ENCODE measurements at regions of chr1 and their contacts with region 1.

Region 1: GRCh38 chr1:12658531-12659453 is 14.9 kb downstream of the AADACL4 start:
- DNase-seq: peak; percentile 43 to 83 (median 76)
- ATAC-seq: peak; percentile 82
- H3K4me3 ChIP-seq: no peak overlapping the region
- H3K4me3 Mint-ChIP-seq: no peak overlapping the region
- H3K27ac ChIP-seq: no peak overlapping the region
- H3K27ac Mint-ChIP-seq: no peak overlapping the region
- H3K4me1 ChIP-seq: no peaks in the 10 kb centered on the region
- H3K4me1 Mint-ChIP-seq: peaks cover 5% of the 10 kb centered on the region
- H3K27me3 ChIP-seq: peaks cover 0 to 5% of the 10 kb centered on the region in 2 experiments
- H3K27me3 Mint-ChIP-seq: peaks cover 5% of the 10 kb centered on the region
- CTCF ChIP-seq: peak; percentile 98

Region 2: GRCh38 chr1:12229835-12230548 is 428.8 kb before region 1 on chr1 and contains the start of gene VPS13D:
- CTCF ChIA-PET with region 1: interaction called, 8 read pairs
- POLR2A ChIA-PET with region 1: no interaction called
- intact Hi-C with region 1: loop called in 1 of 2 experiments (anchors 2 kb)
- DNase-seq: peak; percentile 68 to 91 (median 84)
- ATAC-seq: peak; percentile 95
- H3K4me3 ChIP-seq: peak within 1 kb of the TSS; percentile 95 to 97
- H3K4me3 Mint-ChIP-seq: peak within 1 kb of the TSS; percentile 93
- H3K27ac ChIP-seq: peak within 1 kb of the TSS; percentile 50 to 70
- H3K27ac Mint-ChIP-seq: peak within 1 kb of the TSS; percentile 86
- H3K4me1 ChIP-seq: peaks cover 15% of the 10 kb centered on the region
- H3K4me1 Mint-ChIP-seq: peaks cover 30% of the 10 kb centered on the region
- H3K27me3 ChIP-seq: no peaks in the 10 kb centered on the region
- H3K27me3 Mint-ChIP-seq: no peaks in the 10 kb centered on the region
- CTCF ChIP-seq: peak; percentile 98
- total RNA-seq, gene VPS13D: 55.8 to 58.7 TPM

Region 3: DNA sequence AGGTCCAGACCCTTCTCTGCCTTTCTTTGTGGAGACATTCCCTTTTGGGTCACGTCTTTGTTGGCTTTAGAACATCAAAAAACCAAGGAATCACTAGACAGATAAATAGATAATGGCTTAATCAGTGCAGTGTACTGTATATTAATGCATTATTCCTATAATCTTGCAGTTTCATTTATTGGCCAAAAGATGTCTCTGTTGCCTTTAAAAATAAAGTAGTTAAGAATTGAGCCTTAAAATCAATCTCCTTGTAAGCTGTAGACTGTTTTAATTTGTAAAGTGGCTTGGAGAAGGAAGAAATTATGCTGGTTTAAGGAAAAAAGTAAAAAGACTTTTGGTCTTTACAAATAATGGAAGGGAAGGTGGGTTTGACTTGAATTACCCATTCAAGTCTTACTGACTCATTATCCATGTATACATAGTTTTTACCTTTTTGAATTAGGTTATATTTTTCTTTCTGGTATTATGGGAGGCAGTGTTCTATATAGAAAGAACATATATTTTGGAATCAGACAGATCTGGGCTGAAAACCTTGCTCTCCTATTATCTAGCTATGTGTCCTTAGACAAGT is 344.4 kb before region 1 on chr1:
- CTCF ChIA-PET with region 1: interaction called, 66 read pairs
- POLR2A ChIA-PET with region 1: no interaction called
- intact Hi-C with region 1: loop called (anchors 1 kb)
- DNase-seq: peak in 2 of 9 experiments; percentile 19 to 34
- ATAC-seq: peak; percentile 36
- H3K4me3 ChIP-seq: no peak overlapping the region
- H3K4me3 Mint-ChIP-seq: no peak overlapping the region
- H3K27ac ChIP-seq: no peak overlapping the region
- H3K27ac Mint-ChIP-seq: no peak overlapping the region
- H3K4me1 ChIP-seq: no peaks in the 10 kb centered on the region
- H3K4me1 Mint-ChIP-seq: no peaks in the 10 kb centered on the region
- H3K27me3 ChIP-seq: no peaks in the 10 kb centered on the region
- H3K27me3 Mint-ChIP-seq: no peaks in the 10 kb centered on the region
- CTCF ChIP-seq: peak; percentile 73

Region 4: DNA sequence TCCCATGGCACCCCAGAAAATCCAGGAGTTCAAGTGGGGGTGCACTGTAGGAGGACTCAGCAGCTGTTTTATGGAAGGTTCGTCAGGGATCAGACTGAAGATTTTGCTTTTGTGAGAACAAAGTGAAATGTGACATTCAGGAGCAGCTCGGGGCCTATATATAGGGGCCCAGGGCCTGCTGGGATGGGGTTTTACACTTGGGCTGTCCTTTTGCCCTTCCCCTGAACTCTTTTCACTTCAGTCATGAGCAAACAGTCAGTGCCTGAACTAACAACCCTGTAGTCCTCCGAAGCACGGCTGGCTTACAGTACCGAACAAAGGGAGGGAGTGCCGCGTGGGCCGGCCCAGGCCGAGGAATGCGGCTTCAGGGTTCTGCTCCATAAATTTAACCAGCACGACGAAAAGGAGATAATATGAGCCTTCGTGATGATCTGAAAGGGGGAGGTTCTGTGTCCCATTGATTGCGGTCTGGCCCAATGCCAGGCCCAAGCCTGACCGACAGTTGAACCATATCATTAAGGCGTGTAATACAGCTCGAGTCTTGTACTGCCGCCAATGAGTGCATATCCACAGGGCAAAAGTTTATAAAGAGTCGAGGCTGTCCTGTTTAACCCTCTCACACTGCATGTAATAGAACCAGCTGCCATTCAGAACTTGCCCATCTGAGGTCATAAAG is 180.7 kb before region 1 on chr1:
- CTCF ChIA-PET with region 1: no interaction called
- POLR2A ChIA-PET with region 1: no interaction called
- intact Hi-C with region 1: no loop called
- DNase-seq: peak in 2 of 9 experiments; percentile 40 to 54
- ATAC-seq: peak; percentile 19
- H3K4me3 ChIP-seq: no peak overlapping the region
- H3K4me3 Mint-ChIP-seq: peak overlapping the region; percentile 72
- H3K27ac ChIP-seq: peak overlapping the region; percentile 6 to 63
- H3K27ac Mint-ChIP-seq: peak overlapping the region; percentile 97
- H3K4me1 ChIP-seq: peaks cover 90% of the 10 kb centered on the region
- H3K4me1 Mint-ChIP-seq: peaks cover 90% of the 10 kb centered on the region
- H3K27me3 ChIP-seq: no peaks in the 10 kb centered on the region
- H3K27me3 Mint-ChIP-seq: no peaks in the 10 kb centered on the region
- CTCF ChIP-seq: no peak

Region 5: DNA sequence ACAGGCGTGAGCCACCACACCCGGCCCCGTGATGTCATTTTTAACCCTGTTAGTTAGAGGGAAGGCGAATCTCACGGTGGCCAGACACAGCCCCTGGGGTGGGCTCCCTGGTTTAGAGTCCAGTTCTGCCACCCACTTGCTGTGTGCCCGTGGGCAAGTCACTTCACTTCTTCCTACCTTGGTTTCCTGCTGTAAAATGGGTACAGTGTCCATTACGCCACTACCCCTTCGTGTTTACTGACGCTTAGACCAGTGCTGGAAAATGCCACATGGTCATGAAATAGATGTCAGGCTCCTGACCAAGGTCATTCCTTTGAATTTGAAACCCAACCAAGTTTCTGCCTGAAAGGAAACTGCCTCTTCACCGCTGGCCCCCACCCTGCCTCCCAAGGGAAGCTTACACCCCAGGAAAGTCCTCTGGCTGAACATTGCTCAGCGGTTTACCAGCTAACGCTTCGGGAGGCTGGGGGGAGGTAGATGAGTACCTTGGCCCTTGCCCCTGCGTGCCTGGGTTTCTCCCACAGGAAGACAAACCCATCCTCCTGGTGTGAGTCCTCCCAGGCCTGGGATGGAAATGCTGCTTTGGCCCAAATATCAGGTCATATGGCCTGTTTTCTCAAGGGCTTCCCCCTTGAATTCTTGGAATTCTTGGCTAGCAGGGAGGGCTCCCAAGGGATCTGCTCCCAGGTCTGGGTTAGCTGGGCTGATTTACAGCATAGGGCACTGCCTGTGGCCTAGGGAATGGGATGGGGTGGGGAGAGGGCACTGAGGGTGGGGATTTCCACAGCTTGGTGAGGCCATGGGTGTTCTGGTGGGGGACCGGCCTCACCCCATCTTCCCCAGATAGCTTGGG is 22.5 kb before region 1 on chr1:
- CTCF ChIA-PET with region 1: interaction called, 26 read pairs
- POLR2A ChIA-PET with region 1: no interaction called
- intact Hi-C with region 1: no loop called
- DNase-seq: no peak
- ATAC-seq: no peak
- H3K4me3 ChIP-seq: no peak overlapping the region
- H3K4me3 Mint-ChIP-seq: no peak overlapping the region
- H3K27ac ChIP-seq: no peak overlapping the region
- H3K27ac Mint-ChIP-seq: no peak overlapping the region
- H3K4me1 ChIP-seq: peaks cover 4% of the 10 kb centered on the region
- H3K4me1 Mint-ChIP-seq: peaks cover 9% of the 10 kb centered on the region
- H3K27me3 ChIP-seq: no peaks in the 10 kb centered on the region
- H3K27me3 Mint-ChIP-seq: peaks cover 17% of the 10 kb centered on the region
- CTCF ChIP-seq: no peak

Region 6: DNA sequence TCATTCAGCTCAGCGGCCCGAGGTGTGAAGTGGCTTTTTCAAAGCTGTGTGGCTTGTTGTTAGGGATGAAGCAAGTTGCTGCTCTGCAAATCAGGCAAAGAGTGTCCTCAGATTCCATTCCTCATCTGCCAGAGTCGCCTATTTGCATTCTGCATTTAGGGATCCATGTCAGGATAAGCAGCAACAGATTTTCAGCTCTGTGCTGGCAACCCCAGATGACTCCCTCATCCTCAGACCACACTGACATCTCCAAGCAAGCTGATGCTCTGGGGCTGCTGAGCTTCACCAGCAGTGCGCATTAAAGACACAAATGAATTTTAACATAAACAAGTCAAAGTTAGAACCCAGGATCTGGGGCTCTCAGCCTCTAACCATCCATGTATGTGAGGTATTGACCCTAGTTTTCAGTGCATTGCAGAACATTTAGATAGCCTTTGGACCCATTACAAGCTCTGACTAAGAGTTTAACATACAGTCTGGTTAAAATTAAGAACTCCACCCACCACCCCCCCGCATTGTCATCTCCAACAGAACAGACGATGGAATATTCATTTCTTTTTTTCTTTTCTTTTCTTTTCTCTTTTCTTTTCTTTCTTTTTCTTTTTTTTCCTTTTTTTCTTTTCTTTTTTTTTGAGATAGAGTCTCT is 98.1 kb after region 1 on chr1:
- CTCF ChIA-PET with region 1: no interaction called
- POLR2A ChIA-PET with region 1: no interaction called
- intact Hi-C with region 1: no loop called
- DNase-seq: no peak
- ATAC-seq: no peak
- H3K4me3 ChIP-seq: no peak overlapping the region
- H3K4me3 Mint-ChIP-seq: no peak overlapping the region
- H3K27ac ChIP-seq: no peak overlapping the region
- H3K27ac Mint-ChIP-seq: no peak overlapping the region
- H3K4me1 ChIP-seq: no peaks in the 10 kb centered on the region
- H3K4me1 Mint-ChIP-seq: no peaks in the 10 kb centered on the region
- H3K27me3 ChIP-seq: no peaks in the 10 kb centered on the region
- H3K27me3 Mint-ChIP-seq: peaks cover 24% of the 10 kb centered on the region
- CTCF ChIP-seq: no peak

Region 7: GRCh38 chr1:12810691-12811408 is 152.1 kb after region 1 on chr1:
- CTCF ChIA-PET with region 1: no interaction called
- POLR2A ChIA-PET with region 1: no interaction called
- intact Hi-C with region 1: no loop called
- DNase-seq: no peak
- ATAC-seq: no peak
- H3K4me3 ChIP-seq: no peak overlapping the region
- H3K4me3 Mint-ChIP-seq: no peak overlapping the region
- H3K27ac ChIP-seq: no peak overlapping the region
- H3K27ac Mint-ChIP-seq: no peak overlapping the region
- H3K4me1 ChIP-seq: no peaks in the 10 kb centered on the region
- H3K4me1 Mint-ChIP-seq: no peaks in the 10 kb centered on the region
- H3K27me3 ChIP-seq: peaks cover 0 to 2% of the 10 kb centered on the region in 2 experiments
- H3K27me3 Mint-ChIP-seq: peaks cover 22% of the 10 kb centered on the region
- CTCF ChIP-seq: no peak